GM13976 (cell line): ENCODE measurements at regions of chr11 and their contacts with region 1.

Region 1: GRCh38 chr11:22787551-22788162 is 41.9 kb downstream of the SVIP start:
- DNase-seq: peak; percentile 39
- CTCF ChIP-seq: no peak

Region 2: DNA sequence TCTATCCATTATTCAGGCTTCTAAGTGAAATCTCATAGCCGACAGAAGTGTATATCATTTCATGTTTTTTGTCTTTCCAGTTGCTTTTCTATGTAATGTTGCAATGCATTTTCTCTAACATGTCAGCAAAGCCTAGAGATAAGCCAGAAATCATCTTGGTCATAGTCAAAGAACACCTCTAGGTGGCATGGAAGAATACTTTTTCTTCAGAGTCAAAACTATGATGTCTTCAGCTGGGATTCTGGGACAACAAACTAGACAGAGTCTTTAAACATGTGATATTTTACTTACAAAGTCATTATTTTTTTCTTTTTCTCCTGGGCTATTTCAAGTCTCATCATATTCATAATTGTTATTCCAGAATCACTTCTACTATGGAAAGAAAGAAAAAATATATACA is 116.8 kb before region 1 on chr11:
- in situ Hi-C with region 1: loop called (anchors 10 kb)
- DNase-seq: no peak
- CTCF ChIP-seq: peak; percentile 37